CD4-positive, alpha-beta T cell (primary cell): ENCODE measurements at regions of chr2 and their contacts with region 1.

Region 1: GRCh38 chr2:101341901-101342624 is 33.6 kb upstream of the RNF149 start:
- DNase-seq: peak; percentile 53 to 87 (median 68)
- ATAC-seq: peak; percentile 62
- H3K4me3 ChIP-seq: no peak overlapping the region
- H3K4me3 Mint-ChIP-seq: no peak overlapping the region
- H3K27ac ChIP-seq: no peak overlapping the region
- H3K27ac Mint-ChIP-seq: no peak overlapping the region
- H3K4me1 ChIP-seq: peaks cover 23% of the 10 kb centered on the region
- H3K4me1 Mint-ChIP-seq: peaks cover 43% of the 10 kb centered on the region
- H3K27me3 ChIP-seq: no peaks in the 10 kb centered on the region
- H3K27me3 Mint-ChIP-seq: no peaks in the 10 kb centered on the region
- CTCF ChIP-seq: peak; percentile 93

Region 2: DNA sequence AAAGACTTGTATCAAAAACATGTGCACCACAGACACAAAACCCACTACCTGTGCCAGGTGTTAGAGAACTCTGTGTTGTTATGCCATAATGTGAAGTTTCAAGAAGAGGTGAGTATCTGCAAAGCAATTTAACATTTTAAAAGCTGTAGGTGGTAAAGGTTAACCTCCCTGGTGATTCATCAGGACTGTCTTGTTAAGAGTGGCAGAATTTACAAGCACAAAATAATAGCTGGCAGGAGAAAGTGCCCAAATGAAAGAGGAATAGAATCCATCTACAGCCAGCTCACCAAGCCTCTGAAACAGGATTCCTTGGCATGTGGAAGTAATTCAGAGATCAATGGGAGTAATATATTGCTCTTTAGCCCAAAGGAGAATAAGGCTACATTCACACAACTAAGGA is 1430.3 kb before region 1 on chr2:
- CTCF ChIA-PET with region 1: no interaction called
- POLR2A ChIA-PET with region 1: no interaction called
- intact Hi-C with region 1: no loop called
- DNase-seq: no peak
- ATAC-seq: no peak
- H3K4me3 ChIP-seq: no peak overlapping the region
- H3K4me3 Mint-ChIP-seq: no peak overlapping the region
- H3K27ac ChIP-seq: no peak overlapping the region
- H3K27ac Mint-ChIP-seq: no peak overlapping the region
- H3K4me1 ChIP-seq: no peaks in the 10 kb centered on the region
- H3K4me1 Mint-ChIP-seq: no peaks in the 10 kb centered on the region
- H3K27me3 ChIP-seq: no peaks in the 10 kb centered on the region
- H3K27me3 Mint-ChIP-seq: no peaks in the 10 kb centered on the region
- CTCF ChIP-seq: no peak

Region 3: DNA sequence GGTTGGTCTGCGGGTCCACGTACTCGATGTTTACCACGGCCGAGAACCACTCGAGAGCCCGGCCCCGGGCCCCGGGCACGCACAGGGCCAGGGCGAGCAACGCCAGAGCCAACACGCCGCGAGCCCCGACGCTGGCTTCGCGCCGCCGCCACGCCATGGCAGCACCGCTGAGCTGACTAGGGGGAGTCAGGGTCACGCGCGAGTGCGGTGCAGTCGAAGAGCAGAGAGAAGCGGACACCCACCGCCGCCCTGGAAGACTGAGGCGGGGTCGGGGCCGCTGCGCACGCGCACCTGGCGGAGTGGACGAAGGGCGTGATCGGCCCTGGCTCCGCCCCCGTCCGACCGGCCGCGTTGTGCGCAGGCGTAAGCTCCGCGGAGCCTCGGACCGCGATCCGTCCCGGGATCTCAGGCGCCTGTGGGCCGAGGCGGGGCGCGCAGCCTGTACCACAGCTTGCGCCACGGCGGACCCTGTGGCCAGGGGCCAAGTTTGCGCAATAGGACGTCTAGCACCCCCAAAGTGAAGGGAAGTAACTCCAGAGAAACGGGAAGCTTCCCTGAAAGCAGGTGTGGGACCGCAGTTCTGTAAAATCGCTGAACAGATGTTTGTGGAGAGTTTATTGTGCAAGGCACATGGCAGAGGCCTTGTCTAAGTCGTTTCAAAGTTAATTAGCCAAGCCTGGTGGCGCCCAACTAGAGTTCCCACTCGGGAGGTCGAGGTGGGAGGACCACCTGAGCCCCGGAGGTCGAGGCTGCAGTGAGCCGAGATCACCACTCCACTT is 33.4 kb before region 1 on chr2 and contains the start of gene RNF149:
- CTCF ChIA-PET with region 1: interaction called, 6 read pairs
- POLR2A ChIA-PET with region 1: interaction called, 9 read pairs
- intact Hi-C with region 1: loop called (anchors 2 to 5 kb)
- DNase-seq: peak; percentile 82 to 95 (median 93)
- ATAC-seq: peak; percentile 56
- H3K4me3 ChIP-seq: peak within 1 kb of the TSS; percentile 90
- H3K4me3 Mint-ChIP-seq: peak within 1 kb of the TSS; percentile 98
- H3K27ac ChIP-seq: peak within 1 kb of the TSS; percentile 85 to 95
- H3K27ac Mint-ChIP-seq: peak within 1 kb of the TSS; percentile 96
- H3K4me1 ChIP-seq: peaks cover 67% of the 10 kb centered on the region
- H3K4me1 Mint-ChIP-seq: peaks cover 79% of the 10 kb centered on the region
- H3K27me3 ChIP-seq: no peaks in the 10 kb centered on the region
- H3K27me3 Mint-ChIP-seq: no peaks in the 10 kb centered on the region
- CTCF ChIP-seq: no peak
- total RNA-seq, gene RNF149: 139 to 150 TPM

Region 4: GRCh38 chr2:101387151-101387807 is 45.2 kb after region 1 on chr2 and contains the start of gene CREG2:
- CTCF ChIA-PET with region 1: interaction called, 6 read pairs
- POLR2A ChIA-PET with region 1: interaction called, 5 read pairs
- intact Hi-C with region 1: loop called (anchors 2 kb)
- DNase-seq: peak; percentile 27 to 80 (median 49)
- ATAC-seq: peak; percentile 93
- H3K4me3 ChIP-seq: peak within 1 kb of the TSS; percentile 44
- H3K4me3 Mint-ChIP-seq: peak within 1 kb of the TSS; percentile 79
- H3K27ac ChIP-seq: no peak within 1 kb of the TSS
- H3K27ac Mint-ChIP-seq: no peak within 1 kb of the TSS
- H3K4me1 ChIP-seq: peaks cover 13% of the 10 kb centered on the region
- H3K4me1 Mint-ChIP-seq: peaks cover 11% of the 10 kb centered on the region
- H3K27me3 ChIP-seq: peaks cover 20 to 38% of the 10 kb centered on the region in 2 experiments
- H3K27me3 Mint-ChIP-seq: peaks cover 61% of the 10 kb centered on the region
- CTCF ChIP-seq: peak; percentile 56
- total RNA-seq, gene CREG2: 0.03 TPM in 1 of 2 experiments, not detected in the other

Region 5: DNA sequence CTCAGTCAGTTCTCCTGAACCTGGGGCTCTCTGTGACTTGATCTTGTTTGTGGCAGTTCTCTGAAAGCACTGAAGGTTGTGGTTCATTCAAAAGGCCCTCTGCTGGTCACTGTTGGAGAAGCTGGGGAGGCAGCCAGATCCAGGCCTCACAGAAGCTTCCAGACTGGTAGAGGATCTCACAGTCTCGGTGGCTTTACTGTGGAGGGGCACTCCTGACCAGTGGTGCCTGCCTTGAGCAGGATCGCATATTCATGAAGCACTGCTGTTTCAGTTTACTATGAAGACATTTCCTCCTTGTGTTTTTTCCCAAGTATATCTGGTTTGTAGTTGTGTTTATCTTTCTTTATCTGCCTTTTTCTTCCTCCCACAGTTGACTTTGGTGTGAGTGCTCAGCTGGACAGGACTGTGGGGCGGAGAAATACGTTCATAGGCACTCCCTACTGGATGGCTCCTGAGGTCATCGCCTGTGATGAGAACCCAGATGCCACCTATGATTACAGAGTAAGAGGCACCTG is 489.3 kb after region 1 on chr2:
- CTCF ChIA-PET with region 1: interaction called, 3 read pairs
- POLR2A ChIA-PET with region 1: interaction called, 3 read pairs
- intact Hi-C with region 1: loop called (anchors 2 kb)
- DNase-seq: peak; percentile 40 to 78 (median 52)
- ATAC-seq: peak; percentile 62
- H3K4me3 ChIP-seq: no peak overlapping the region
- H3K4me3 Mint-ChIP-seq: peak overlapping the region; percentile 40
- H3K27ac ChIP-seq: no peak overlapping the region
- H3K27ac Mint-ChIP-seq: peak overlapping the region; percentile 44
- H3K4me1 ChIP-seq: peaks cover 41% of the 10 kb centered on the region
- H3K4me1 Mint-ChIP-seq: peaks cover 53% of the 10 kb centered on the region
- H3K27me3 ChIP-seq: no peaks in the 10 kb centered on the region
- H3K27me3 Mint-ChIP-seq: no peaks in the 10 kb centered on the region
- CTCF ChIP-seq: peak; percentile 59